Transverse colon (tissue), 4 donors: ENCODE measurements at regions of chr22 and their contacts with region 1.

Region 1: GRCh38 chr22:18077639-18078328 is at the start of gene PEX26:
- DNase-seq: peak; percentile 96
- H3K4me3 ChIP-seq: peak within 1 kb of the TSS; percentile 57 to 99 (median 91)
- H3K27ac ChIP-seq: peak within 1 kb of the TSS; percentile 87 to 91 (median 90)
- H3K4me1 ChIP-seq: peaks cover 18 to 27% (median 26%) of the 10 kb centered on the region in 4 donors
- H3K27me3 ChIP-seq: no peaks in the 10 kb centered on the region
- CTCF ChIP-seq: no peak
- EP300 ChIP-seq: no peak
- POLR2A ChIP-seq: peak; percentile 84
- total RNA-seq, gene PEX26: 46.4 to 211 (median 93.4) TPM

Region 2: GRCh38 chr22:17477391-17477833 is 600.4 kb before region 1 on chr22:
- in situ Hi-C with region 1: no loop called
- intact Hi-C with region 1: no loop called
- DNase-seq: no peak
- H3K4me3 ChIP-seq: no peak overlapping the region
- H3K27ac ChIP-seq: no peak overlapping the region
- H3K4me1 ChIP-seq: no peaks in the 10 kb centered on the region
- H3K27me3 ChIP-seq: peaks cover 4% of the 10 kb centered on the region
- CTCF ChIP-seq: no peak
- EP300 ChIP-seq: no peak
- POLR2A ChIP-seq: no peak

Region 3: DNA sequence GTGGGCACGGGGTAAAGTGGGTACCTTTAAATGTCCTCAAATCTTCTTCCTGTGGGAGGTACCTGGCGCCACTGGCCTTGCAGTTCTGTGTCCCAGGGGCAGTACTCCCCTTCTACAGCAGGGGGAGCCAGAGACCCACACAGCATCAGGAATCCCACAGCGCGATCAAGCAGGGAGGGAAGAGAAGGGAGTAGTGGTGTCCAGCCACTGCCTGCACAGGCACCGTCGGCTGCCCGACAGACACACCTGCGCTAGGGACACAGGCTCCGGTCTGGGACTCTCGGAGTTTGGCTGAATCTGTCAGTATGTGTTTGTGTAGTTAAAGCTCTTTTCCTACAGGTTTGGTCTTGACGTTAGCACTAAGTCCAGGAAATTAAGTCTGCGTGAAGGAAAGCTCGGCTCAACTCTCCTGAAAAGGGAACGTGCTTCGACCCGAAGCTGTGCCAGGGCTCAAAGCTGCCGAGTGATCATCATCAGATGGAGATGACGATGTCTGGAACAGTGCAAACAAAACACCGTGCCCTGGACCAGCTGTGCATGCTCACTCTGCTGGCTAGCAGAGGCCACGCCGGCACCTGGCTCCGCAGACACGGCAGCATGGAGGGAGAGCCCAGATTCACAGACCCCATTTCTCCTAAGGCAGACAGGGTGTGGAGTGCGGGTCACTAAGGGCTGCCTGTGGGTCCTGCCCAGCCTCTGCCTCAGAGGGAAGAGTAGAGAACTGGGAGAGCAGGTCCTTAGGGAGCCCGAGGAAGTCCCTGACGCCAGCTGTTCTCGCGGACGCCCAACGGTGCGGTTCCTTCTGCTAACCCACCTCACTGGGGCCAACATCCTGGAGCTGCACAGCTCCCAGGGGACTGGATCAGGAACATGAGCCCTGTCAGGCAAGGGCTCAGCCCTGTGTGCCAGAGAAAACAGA is 247.5 kb before region 1 on chr22:
- in situ Hi-C with region 1: loop called in 3 of 4 experiments (anchors 5 to 10 kb)
- intact Hi-C with region 1: loop called (anchors 5 kb)
- DNase-seq: peak; percentile 91
- H3K4me3 ChIP-seq: no peak overlapping the region
- H3K27ac ChIP-seq: peak overlapping the region; percentile 55 to 72 (median 64)
- H3K4me1 ChIP-seq: peaks cover 4 to 36% (median 29%) of the 10 kb centered on the region in 4 donors
- H3K27me3 ChIP-seq: no peaks in the 10 kb centered on the region
- CTCF ChIP-seq: peak; percentile 99 to 100 (median 99)
- EP300 ChIP-seq: no peak
- POLR2A ChIP-seq: no peak

Region 4: DNA sequence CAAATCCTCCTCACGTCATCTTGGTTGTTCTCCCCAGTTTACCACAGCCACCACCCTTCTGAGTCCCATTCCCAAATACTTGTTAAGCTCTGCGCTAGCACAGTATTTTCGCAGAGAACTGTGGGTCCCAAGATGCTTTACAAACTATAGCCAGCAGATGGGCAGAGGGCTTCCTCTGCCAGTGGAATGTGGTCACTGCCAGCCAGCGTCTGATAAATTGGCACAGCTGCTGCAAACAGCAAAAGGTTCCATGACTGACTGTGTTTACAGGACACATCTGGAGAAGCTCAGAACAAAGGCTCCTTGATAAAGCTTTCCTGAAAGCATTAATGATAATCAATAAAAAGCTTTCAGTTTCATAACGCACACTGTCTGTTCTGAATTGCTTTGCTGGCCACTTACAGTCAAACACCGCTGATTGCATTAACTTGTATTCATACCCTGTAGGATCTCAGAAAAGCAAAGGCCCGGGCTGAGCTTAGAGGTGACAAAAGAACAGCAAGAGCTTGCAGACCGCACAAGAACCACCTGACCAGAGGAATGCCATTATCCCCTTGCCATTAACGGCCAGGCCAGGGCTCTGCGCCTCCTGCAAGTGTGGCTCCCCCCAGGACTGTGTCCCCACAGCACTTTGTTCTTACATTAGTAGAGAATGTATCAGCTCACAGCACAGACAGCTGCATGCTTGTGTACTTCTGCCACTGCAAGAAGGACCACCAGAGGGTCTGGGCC is 174.1 kb before region 1 on chr22:
- in situ Hi-C with region 1: no loop called
- intact Hi-C with region 1: loop called (anchors 10 kb)
- DNase-seq: no peak
- H3K4me3 ChIP-seq: no peak overlapping the region
- H3K27ac ChIP-seq: peak overlapping the region; percentile 6 to 63 (median 26)
- H3K4me1 ChIP-seq: peaks cover 0 to 8% (median 3%) of the 10 kb centered on the region in 4 donors
- H3K27me3 ChIP-seq: no peaks in the 10 kb centered on the region
- CTCF ChIP-seq: peak in 1 of 5 experiments; percentile 27
- EP300 ChIP-seq: no peak
- POLR2A ChIP-seq: no peak

Region 5: DNA sequence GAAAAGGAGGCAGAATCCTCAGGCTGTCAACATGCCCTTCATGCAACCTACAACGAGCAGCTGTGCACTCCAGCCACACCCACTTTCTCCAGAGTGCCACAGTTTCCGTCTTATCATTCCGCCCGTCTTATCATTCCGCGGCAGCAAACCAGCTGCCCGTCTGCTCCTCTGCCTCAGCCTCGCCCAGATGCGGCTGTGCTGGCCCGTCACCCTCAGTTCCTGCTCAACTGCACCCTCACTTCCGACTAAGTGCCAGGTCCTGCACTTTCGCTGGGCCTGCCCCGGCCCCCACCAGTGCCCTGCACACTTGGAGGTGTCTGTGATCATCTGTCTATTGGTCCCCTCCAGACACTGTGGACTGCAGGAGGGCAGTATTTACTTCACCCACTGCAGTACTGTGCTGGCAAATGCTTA is 97.1 kb before region 1 on chr22:
- in situ Hi-C with region 1: no loop called
- intact Hi-C with region 1: no loop called
- DNase-seq: peak; percentile 81
- H3K4me3 ChIP-seq: peak overlapping the region in 1 of 4 donors; percentile 8
- H3K27ac ChIP-seq: peak overlapping the region; percentile 50 to 74 (median 58)
- H3K4me1 ChIP-seq: peaks cover 9 to 28% (median 16%) of the 10 kb centered on the region in 4 donors
- H3K27me3 ChIP-seq: no peaks in the 10 kb centered on the region
- CTCF ChIP-seq: no peak
- EP300 ChIP-seq: no peak
- POLR2A ChIP-seq: no peak

Region 6: DNA sequence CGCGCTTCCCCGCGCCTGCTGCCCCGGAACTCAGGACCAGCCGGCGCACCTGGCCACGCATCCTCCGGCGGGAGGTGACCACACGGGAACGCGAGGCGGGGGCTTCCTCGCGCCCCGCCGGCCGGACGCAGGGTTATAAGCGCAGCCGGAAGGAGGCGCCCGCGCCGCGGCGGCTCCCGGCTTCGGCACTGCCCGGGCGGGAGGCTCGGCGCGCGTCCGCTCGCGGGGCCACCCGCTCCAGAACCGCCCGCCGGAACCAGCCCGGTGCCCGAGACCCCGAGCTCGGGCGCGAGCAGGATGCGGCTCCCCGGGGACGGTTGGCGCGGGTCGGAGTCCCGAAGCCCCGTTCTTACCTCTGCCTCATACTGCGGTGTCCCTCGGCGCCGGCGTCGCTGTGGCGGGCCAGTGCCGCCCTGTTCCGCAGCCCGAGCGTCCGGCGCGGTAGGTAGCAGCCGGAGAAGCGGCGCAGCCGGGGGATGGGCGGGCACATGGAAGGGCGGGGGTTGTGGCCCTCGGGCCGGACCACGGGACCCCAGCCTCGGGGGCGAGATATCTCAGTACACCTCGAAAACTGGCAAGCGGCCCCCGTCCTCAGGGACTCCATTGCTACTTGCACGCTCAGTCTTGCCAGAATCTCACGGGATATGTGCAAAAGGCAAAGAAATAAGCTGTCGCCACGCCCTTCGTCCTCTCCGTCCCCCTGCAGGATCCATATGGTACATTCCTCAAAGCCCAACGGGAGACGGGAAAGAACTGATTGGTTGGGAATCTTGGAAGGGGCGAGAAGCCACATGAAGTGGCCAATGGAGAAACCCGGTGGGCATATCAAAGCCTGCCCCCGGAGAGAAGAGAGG is 76.5 kb before region 1 on chr22:
- in situ Hi-C with region 1: no loop called
- intact Hi-C with region 1: loop called (anchors 2 kb)
- DNase-seq: peak; percentile 92
- H3K4me3 ChIP-seq: peak overlapping the region; percentile 55 to 93 (median 78)
- H3K27ac ChIP-seq: peak overlapping the region; percentile 88 to 97 (median 94)
- H3K4me1 ChIP-seq: peaks cover 12 to 45% (median 30%) of the 10 kb centered on the region in 4 donors
- H3K27me3 ChIP-seq: no peaks in the 10 kb centered on the region
- CTCF ChIP-seq: peak; percentile 33 to 78 (median 54)
- EP300 ChIP-seq: no peak
- POLR2A ChIP-seq: peak; percentile 83

Region 7: DNA sequence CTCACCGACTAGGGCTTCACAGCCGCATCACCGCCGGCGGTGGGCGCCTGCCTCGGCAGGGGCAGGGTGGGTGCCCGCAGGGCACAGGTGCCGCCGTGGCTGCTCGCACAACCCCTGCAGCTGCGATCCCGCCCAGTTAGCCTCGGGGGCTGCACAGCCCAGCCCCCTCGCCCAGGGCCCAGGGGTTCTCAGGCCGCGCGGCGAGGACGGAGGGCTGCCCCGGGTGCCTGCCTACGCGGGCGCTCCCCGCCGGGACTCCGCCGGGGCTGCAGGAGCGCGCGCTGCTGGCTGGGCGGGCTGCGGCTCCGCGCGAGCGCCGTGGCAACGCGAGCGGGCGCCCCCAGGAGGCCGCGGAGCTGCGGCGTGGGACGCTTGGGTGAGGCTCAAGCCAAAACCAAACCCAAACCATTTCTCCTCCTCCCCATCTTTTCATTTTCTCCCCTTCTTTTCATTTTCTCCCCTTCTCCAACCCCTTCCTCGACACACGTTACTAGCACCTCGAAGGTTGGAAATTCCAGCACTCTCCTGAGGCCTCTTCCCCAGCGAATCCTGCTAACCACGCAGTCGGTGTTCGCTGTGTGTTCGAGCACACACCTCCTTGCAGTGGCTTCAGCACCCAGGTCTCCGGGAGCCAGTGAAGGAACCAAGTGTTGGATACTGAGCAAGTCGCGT is 53.4 kb before region 1 on chr22 and contains the start of gene MICAL3:
- in situ Hi-C with region 1: loop called in 1 of 4 experiments (anchors 10 kb)
- intact Hi-C with region 1: loop called (anchors 10 kb)
- DNase-seq: peak; percentile 75
- H3K4me3 ChIP-seq: peak within 1 kb of the TSS; percentile 52 to 84 (median 66)
- H3K27ac ChIP-seq: peak within 1 kb of the TSS; percentile 78 to 91 (median 88)
- H3K4me1 ChIP-seq: peaks cover 17 to 23% (median 19%) of the 10 kb centered on the region in 4 donors
- H3K27me3 ChIP-seq: no peaks in the 10 kb centered on the region
- CTCF ChIP-seq: peak; percentile 15 to 56 (median 47)
- EP300 ChIP-seq: no peak
- POLR2A ChIP-seq: no peak
- total RNA-seq, gene MICAL3: 84.2 to 290 (median 151) TPM